A673 (cell line): ENCODE measurements at regions of chr19 and their contacts with region 1.

Region 1: GRCh38 chr19:3365836-3366752 is at the start of gene NFIC:
- DNase-seq: peak; percentile 89
- H3K4me3 ChIP-seq: peak within 1 kb of the TSS; percentile 78
- H3K27ac ChIP-seq: peak within 1 kb of the TSS; percentile 96
- H3K4me1 ChIP-seq: peaks cover 54% of the 10 kb centered on the region
- H3K27me3 ChIP-seq: no peaks in the 10 kb centered on the region
- CTCF ChIP-seq: no peak
- total RNA-seq, gene NFIC: 112 and 122 TPM in 2 replicates

Region 2: DNA sequence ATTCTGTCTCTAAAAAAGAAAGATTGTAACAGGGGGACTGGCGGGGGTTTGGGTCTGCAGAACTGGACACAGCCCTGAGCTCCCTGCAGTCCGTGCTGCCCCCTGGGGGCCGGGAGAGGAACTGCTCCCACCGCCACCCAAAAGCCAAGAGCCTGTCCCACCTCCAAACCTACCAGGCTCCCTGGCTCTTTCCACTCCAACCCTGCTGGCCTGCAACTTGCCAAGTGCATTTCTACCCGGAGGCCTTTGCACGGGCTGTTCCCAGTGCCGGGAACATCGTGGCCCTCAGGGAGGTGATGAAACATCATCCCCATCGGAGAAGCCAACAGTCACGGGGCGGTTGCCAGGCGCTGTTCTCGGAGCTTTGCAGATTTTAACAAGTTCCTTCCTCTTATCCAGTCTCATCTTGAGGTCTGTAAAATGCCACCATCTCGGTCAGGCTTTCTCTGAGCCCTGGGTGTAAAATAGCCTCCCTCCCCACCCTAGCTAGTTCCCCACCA is 63.5 kb after region 1 on chr19:
- CTCF ChIA-PET with region 1: no interaction called
- POLR2A ChIA-PET with region 1: no interaction called
- intact Hi-C with region 1: loop called (anchors 5 kb)
- DNase-seq: peak; percentile 84
- H3K4me3 ChIP-seq: no peak overlapping the region
- H3K27ac ChIP-seq: peak overlapping the region; percentile 84
- H3K4me1 ChIP-seq: peaks cover 23% of the 10 kb centered on the region
- H3K27me3 ChIP-seq: no peaks in the 10 kb centered on the region
- CTCF ChIP-seq: peak; percentile 93